Activated naive CD8-positive, alpha-beta T cell treated with anti-CD3 and anti-CD28 coated beads, Interleukin-2, amount 10 ng/mL, durations not matched to agents 7 days and 5 days (primary cell): ENCODE measurements at regions of chr10 and their contacts with region 1.

Region 1: DNA sequence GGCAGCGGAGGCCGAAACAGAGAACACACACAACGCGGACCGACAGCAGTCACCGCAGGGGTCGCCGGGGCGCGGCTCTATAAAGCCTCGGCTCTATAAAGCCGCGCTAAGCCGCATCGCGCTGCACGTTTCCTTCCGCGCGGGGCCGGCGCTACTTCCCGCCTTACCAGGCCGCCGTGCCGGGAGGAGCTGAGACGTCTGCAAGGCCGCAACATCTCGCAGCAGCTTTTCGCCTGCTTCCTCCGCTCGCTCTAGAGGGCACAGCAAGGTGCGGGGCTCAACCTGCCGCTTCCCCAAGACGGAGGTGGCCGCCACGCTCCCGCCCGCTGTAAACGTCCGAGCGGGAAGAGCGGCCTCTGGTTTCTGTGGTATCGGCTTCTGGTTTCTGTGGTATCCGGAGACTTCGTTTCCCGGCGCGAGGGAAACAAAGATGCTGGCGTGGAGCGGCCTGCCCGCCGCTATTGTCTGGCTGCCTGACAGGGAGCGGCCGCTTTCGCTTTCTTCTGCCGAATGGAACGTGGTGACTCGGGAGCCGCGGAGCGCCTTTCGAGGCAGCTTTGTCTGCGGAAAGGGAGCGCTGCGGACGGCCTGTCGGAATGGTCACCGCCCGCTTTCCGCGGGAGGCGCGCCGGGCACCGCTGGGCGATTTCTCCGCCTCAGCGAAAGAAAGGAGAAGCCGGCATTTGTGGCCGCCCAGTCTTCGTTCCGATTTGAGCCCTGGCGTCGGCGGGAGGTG is 91.8 kb downstream of the SPAG6 start:
- DNase-seq: peak; percentile 89
- ATAC-seq: peak; percentile 89
- H3K4me3 Mint-ChIP-seq: peak overlapping the region; percentile 95
- H3K27ac Mint-ChIP-seq: peak overlapping the region; percentile 97
- H3K4me1 Mint-ChIP-seq: peaks cover 28% of the 10 kb centered on the region
- H3K27me3 Mint-ChIP-seq: peaks cover 22% of the 10 kb centered on the region

Region 2: GRCh38 chr10:22003079-22003913 is 433.8 kb before region 1 on chr10 and contains the start of gene DNAJC1:
- POLR2A ChIA-PET with region 1: interaction called, 14 read pairs
- DNase-seq: peak; percentile 99
- ATAC-seq: peak; percentile 94
- H3K4me3 Mint-ChIP-seq: peak within 1 kb of the TSS; percentile 98
- H3K27ac Mint-ChIP-seq: peak within 1 kb of the TSS; percentile 97
- H3K4me1 Mint-ChIP-seq: peaks cover 27% of the 10 kb centered on the region
- H3K27me3 Mint-ChIP-seq: peaks cover 12% of the 10 kb centered on the region
- total RNA-seq, gene DNAJC1: 22.3 to 23.0 TPM

Region 3: GRCh38 chr10:22228943-22229801 is 207.9 kb before region 1 on chr10:
- POLR2A ChIA-PET with region 1: interaction called, 14 read pairs
- DNase-seq: peak; percentile 88
- ATAC-seq: peak; percentile 78
- H3K4me3 Mint-ChIP-seq: peak overlapping the region; percentile 89
- H3K27ac Mint-ChIP-seq: peak overlapping the region; percentile 96
- H3K4me1 Mint-ChIP-seq: peaks cover 24% of the 10 kb centered on the region
- H3K27me3 Mint-ChIP-seq: peaks cover 13% of the 10 kb centered on the region

Region 4: GRCh38 chr10:22316285-22317120 is 120.5 kb before region 1 on chr10 and contains the start of gene COMMD3:
- POLR2A ChIA-PET with region 1: interaction called, 19 read pairs
- DNase-seq: peak; percentile 90
- ATAC-seq: peak; percentile 67
- H3K4me3 Mint-ChIP-seq: peak within 1 kb of the TSS; percentile 90
- H3K27ac Mint-ChIP-seq: peak within 1 kb of the TSS; percentile 89
- H3K4me1 Mint-ChIP-seq: peaks cover 23% of the 10 kb centered on the region
- H3K27me3 Mint-ChIP-seq: peaks cover 36% of the 10 kb centered on the region
- total RNA-seq, gene COMMD3: 55.3 to 61.4 TPM

Region 5: GRCh38 chr10:22340362-22341189 is 96.5 kb before region 1 on chr10:
- POLR2A ChIA-PET with region 1: interaction called, 14 read pairs
- DNase-seq: peak; percentile 85
- ATAC-seq: peak; percentile 64
- H3K4me3 Mint-ChIP-seq: peak overlapping the region; percentile 89
- H3K27ac Mint-ChIP-seq: peak overlapping the region; percentile 88
- H3K4me1 Mint-ChIP-seq: peaks cover 31% of the 10 kb centered on the region
- H3K27me3 Mint-ChIP-seq: peaks cover 79% of the 10 kb centered on the region

Region 6: GRCh38 chr10:22491931-22492615 is 55.0 kb after region 1 on chr10:
- POLR2A ChIA-PET with region 1: interaction called, 11 read pairs
- DNase-seq: peak; percentile 46
- ATAC-seq: peak; percentile 94
- H3K4me3 Mint-ChIP-seq: peak overlapping the region; percentile 51
- H3K27ac Mint-ChIP-seq: peak overlapping the region; percentile 39
- H3K4me1 Mint-ChIP-seq: peaks cover 23% of the 10 kb centered on the region
- H3K27me3 Mint-ChIP-seq: peaks cover 35% of the 10 kb centered on the region